ENCODE measurements at regions of chr19 and their contacts with region 1.

Region 1: DNA sequence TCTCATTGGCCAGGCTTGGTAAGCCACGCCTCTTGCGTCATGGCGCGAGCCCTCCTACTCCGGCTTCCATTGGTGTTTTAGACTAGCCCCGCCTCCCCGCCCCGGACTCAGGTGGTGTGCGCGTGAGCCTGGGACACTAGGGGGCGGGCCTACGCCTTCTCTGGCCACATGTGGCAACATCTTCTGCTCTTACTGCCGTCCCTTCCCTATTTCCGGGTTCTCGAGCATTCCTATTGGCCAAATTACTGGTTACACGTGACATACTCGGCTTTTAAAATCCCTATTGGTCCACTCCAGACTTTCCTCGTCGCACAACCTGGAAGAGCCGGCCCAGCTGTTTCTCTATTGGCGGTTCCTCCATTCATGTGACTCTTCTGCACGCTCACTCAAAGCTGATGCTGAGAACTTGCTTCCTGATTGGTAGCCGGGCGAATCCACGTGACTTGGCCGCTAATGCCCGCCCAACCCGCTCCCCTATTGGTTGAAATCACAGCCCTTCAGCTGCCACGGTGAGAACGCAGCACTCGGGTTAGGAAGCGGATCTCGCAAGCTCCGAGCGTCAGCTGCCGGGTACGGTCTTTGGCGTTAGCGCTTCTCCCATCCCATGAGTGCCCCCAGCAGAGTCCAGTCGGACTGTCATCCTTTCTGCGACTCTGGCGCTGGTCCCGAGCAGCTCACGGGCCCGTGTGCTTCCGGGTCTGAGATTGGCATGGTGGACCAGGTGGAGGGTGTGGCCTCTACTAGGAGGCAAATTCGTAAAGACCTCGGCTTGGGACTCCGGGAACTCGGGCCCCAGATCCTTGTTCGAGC is at the start of gene BLOC1S3:
- DNase-seq: peak; percentile 100
- ATAC-seq: peak; percentile 92
- H3K4me3 Mint-ChIP-seq: peak within 1 kb of the TSS; percentile 90
- H3K27ac Mint-ChIP-seq: peak within 1 kb of the TSS; percentile 94
- H3K4me1 Mint-ChIP-seq: peaks cover 8% of the 10 kb centered on the region; the same call in 1 of the 2 replicates
- H3K27me3 Mint-ChIP-seq: peaks cover 8% of the 10 kb centered on the region; the same call in 1 of the 2 replicates
- CTCF ChIP-seq: peak; percentile 38
- total RNA-seq, gene BLOC1S3: 9.0 to 10.8 TPM (median 10.0 TPM) in 3 replicates

Region 2: DNA sequence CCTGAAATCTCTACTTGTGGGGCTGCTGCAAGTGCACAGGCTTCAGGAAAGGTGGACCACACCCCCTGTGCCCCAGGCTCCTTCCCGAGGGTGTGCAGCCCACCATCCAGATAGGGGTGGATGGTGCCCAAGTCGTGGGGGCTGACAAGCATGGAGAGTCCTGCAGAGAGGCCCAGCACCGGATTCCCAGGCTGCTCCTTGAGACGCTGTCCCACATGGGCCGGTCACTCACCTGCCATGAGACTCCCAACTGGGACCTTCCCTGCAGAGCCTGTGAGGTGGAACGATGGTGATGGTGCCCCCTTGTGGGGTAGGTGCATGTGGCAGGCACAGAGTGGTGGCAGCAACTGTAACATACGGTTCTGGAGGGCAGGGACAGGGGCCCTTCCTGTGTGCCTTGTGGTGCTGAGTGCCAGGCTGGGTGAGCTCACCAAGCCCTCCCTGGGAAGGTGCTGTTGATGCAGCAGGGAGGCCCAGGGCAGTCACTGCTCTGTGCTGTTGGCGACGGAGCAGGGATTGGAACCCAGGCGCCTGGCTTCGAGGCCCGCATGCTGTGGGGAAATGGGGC is 52.5 kb before region 1 on chr19:
- CTCF ChIA-PET with region 1: interaction called, 12 read pairs
- POLR2A ChIA-PET with region 1: no interaction called
- DNase-seq: peak; percentile 90
- ATAC-seq: peak; percentile 93
- H3K4me3 Mint-ChIP-seq: no peak overlapping the region
- H3K27ac Mint-ChIP-seq: peak overlapping the region; percentile 19; the same call in 1 of the 2 replicates
- H3K4me1 Mint-ChIP-seq: peaks cover 16% of the 10 kb centered on the region
- H3K27me3 Mint-ChIP-seq: no peaks in the 10 kb centered on the region
- CTCF ChIP-seq: peak; percentile 76

Region 3: DNA sequence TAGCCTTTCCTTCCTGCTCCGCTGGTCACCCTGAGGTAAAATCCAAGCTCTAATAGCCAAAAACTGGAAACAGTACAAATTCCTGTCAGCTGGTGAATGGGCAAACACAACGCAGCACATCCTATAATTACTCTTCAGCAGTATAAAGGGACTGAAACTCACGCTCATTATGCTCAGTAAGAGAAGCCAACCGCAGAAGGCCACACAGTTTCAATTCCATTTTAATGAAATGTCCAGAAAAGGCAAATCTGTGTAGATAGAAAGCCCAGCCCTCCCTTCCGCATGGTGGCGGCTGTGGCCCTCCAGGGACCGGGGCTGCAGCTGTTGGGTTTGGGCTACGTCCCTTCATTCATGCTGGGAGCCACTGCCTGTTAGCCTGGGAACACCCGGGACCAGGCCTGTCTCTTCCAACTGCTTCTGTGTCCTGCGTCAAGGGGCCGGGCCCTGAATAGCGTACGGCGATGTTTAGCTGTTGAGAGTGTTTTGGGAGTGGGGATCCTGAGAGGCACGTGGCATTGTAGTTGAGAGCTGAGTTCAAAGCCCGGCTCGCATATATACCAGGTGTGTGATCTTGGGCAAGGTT is 41.2 kb before region 1 on chr19:
- CTCF ChIA-PET with region 1: no interaction called
- POLR2A ChIA-PET with region 1: no interaction called
- DNase-seq: no peak
- ATAC-seq: no peak
- H3K4me3 Mint-ChIP-seq: no peak overlapping the region
- H3K27ac Mint-ChIP-seq: peak overlapping the region; percentile 86
- H3K4me1 Mint-ChIP-seq: peaks cover 31% of the 10 kb centered on the region
- H3K27me3 Mint-ChIP-seq: no peaks in the 10 kb centered on the region
- CTCF ChIP-seq: no peak

Region 4: GRCh38 chr19:45164577-45165335 is 13.7 kb before region 1 on chr19:
- CTCF ChIA-PET with region 1: interaction called, 73 read pairs
- POLR2A ChIA-PET with region 1: interaction called, 3 read pairs
- DNase-seq: peak; percentile 66
- ATAC-seq: peak; percentile 67
- H3K4me3 Mint-ChIP-seq: no peak overlapping the region
- H3K27ac Mint-ChIP-seq: no peak overlapping the region
- H3K4me1 Mint-ChIP-seq: peaks cover 12% of the 10 kb centered on the region
- H3K27me3 Mint-ChIP-seq: peaks cover 4% of the 10 kb centered on the region
- CTCF ChIP-seq: no peak

Region 5: DNA sequence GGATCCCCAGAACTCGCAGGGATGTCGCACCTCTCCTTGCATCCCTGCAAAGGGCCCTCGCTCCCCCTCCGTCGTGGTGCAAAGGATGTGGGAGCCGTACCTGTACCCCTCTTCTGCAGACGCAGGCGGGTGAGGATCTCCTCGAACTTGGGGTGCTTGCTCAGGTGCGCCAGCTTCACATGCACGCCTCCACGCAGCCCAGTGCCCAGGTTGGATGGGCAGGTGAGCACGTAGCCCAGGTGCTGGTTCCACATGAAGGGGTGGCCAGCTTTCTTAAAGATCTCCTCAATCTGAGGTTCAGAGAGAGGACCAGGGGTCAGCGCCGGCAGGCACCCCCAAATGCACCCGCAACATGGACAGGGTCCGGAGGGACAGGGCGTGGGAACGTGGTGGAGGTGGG is 128.9 kb after region 1 on chr19:
- CTCF ChIA-PET with region 1: interaction called, 12 read pairs
- POLR2A ChIA-PET with region 1: no interaction called
- DNase-seq: no peak
- ATAC-seq: no peak
- H3K4me3 Mint-ChIP-seq: no peak overlapping the region
- H3K27ac Mint-ChIP-seq: no peak overlapping the region
- H3K4me1 Mint-ChIP-seq: peaks cover 13% of the 10 kb centered on the region
- H3K27me3 Mint-ChIP-seq: peaks cover 65% of the 10 kb centered on the region
- CTCF ChIP-seq: no peak

Measured in WTC11 (cell line).